ENCODE measurements at regions of chr9 and their contacts with region 1.

Region 1: GRCh38 chr9:26131886-26132285 is 453.6 kb upstream of the TUSC1 start:
- DNase-seq: no peak
- H3K4me3 ChIP-seq: no peak overlapping the region
- H3K27ac ChIP-seq: no peak overlapping the region
- H3K4me1 ChIP-seq: no peaks in the 10 kb centered on the region
- H3K27me3 ChIP-seq: no peaks in the 10 kb centered on the region
- CTCF ChIP-seq: no peak

Region 2: GRCh38 chr9:26181836-26182235 is 50.0 kb after region 1 on chr9:
- CTCF ChIA-PET with region 1: no interaction called
- POLR2A ChIA-PET with region 1: no interaction called
- intact Hi-C with region 1: loop called (anchors 10 kb)
- DNase-seq: no peak
- H3K4me3 ChIP-seq: no peak overlapping the region
- H3K27ac ChIP-seq: no peak overlapping the region
- H3K4me1 ChIP-seq: no peaks in the 10 kb centered on the region
- H3K27me3 ChIP-seq: no peaks in the 10 kb centered on the region
- CTCF ChIP-seq: no peak